ENCODE measurements at regions of chr12 and their contacts with region 1.

Region 1: DNA sequence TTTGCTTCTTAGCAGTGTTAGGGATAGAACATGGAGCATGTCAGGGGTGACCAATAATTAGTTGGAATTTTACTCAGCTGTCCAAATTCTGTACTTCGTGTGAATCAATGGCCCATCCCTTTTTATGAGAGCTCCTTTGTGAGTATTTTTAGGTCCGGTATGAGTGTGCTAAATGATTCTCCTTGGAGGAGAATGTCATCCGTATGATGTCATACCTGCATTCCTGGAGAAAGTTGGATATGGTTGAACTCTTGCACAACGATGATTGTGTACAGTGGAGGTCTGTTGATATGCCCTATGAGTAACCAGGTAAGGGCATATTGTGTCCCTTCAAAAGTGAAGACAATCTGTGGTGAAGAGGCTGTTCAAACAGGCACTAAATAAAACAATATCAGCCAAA is 400.8 kb downstream of the GXYLT1 start:
- DNase-seq: no peak
- H3K4me3 ChIP-seq: no peak overlapping the region
- H3K27ac ChIP-seq: no peak overlapping the region
- H3K4me1 ChIP-seq: peaks cover 4% of the 10 kb centered on the region
- H3K27me3 ChIP-seq: no peaks in the 10 kb centered on the region
- CTCF ChIP-seq: no peak
- POLR2A ChIP-seq: no peak

Region 2: DNA sequence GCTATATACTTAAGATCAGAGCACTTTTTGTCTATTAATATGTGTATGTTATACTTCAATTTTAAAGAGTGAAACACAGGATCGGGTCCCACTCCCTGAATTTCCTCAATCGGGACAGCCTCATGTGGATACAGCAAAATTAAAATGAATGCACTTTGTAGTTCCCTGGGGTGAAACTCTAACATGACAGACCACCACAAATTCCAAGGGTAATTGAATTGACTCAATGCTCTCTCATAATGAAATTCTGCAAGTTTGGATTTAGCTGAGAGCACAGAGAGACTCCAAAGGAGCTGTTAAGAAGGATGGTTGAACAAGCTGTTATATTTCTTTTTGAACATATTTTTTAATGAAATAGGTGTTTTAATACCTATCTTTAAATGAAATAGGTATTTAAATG is 12.8 kb before region 1 on chr12:
- CTCF ChIA-PET with region 1: interaction called, 11 read pairs
- POLR2A ChIA-PET with region 1: no interaction called
- dilution Hi-C with region 1: no loop called
- intact Hi-C with region 1: no loop called
- DNase-seq: no peak
- H3K4me3 ChIP-seq: no peak overlapping the region
- H3K27ac ChIP-seq: no peak overlapping the region
- H3K4me1 ChIP-seq: no peaks in the 10 kb centered on the region
- H3K27me3 ChIP-seq: no peaks in the 10 kb centered on the region
- CTCF ChIP-seq: no peak
- POLR2A ChIP-seq: no peak

Region 3: GRCh38 chr12:41769810-41770209 is 26.0 kb after region 1 on chr12:
- CTCF ChIA-PET with region 1: no interaction called
- POLR2A ChIA-PET with region 1: no interaction called
- dilution Hi-C with region 1: no loop called
- intact Hi-C with region 1: no loop called
- DNase-seq: no peak
- H3K4me3 ChIP-seq: no peak overlapping the region
- H3K27ac ChIP-seq: no peak overlapping the region
- H3K4me1 ChIP-seq: no peaks in the 10 kb centered on the region
- H3K27me3 ChIP-seq: no peaks in the 10 kb centered on the region
- CTCF ChIP-seq: no peak
- POLR2A ChIP-seq: no peak

Measured in endothelial cell of umbilical vein (primary cell).